AG04450 (cell line): ENCODE measurements at regions of chr3 and their contacts with region 1.

Region 1: GRCh38 chr3:158659454-158660237 is 12.8 kb downstream of the LXN start:
- DNase-seq: peak; percentile 55
- H3K4me3 ChIP-seq: no peak overlapping the region
- H3K27ac ChIP-seq: no peak overlapping the region
- H3K27me3 ChIP-seq: no peaks in the 10 kb centered on the region
- CTCF ChIP-seq: peak; percentile 76

Region 2: GRCh38 chr3:158539414-158540014 is 120.1 kb before region 1 on chr3:
- CTCF ChIA-PET with region 1: interaction called, 22 read pairs
- POLR2A ChIA-PET with region 1: no interaction called
- DNase-seq: peak; percentile 16
- H3K4me3 ChIP-seq: no peak overlapping the region
- H3K27ac ChIP-seq: no peak overlapping the region
- H3K27me3 ChIP-seq: no peaks in the 10 kb centered on the region
- CTCF ChIP-seq: peak; percentile 60

Region 3: DNA sequence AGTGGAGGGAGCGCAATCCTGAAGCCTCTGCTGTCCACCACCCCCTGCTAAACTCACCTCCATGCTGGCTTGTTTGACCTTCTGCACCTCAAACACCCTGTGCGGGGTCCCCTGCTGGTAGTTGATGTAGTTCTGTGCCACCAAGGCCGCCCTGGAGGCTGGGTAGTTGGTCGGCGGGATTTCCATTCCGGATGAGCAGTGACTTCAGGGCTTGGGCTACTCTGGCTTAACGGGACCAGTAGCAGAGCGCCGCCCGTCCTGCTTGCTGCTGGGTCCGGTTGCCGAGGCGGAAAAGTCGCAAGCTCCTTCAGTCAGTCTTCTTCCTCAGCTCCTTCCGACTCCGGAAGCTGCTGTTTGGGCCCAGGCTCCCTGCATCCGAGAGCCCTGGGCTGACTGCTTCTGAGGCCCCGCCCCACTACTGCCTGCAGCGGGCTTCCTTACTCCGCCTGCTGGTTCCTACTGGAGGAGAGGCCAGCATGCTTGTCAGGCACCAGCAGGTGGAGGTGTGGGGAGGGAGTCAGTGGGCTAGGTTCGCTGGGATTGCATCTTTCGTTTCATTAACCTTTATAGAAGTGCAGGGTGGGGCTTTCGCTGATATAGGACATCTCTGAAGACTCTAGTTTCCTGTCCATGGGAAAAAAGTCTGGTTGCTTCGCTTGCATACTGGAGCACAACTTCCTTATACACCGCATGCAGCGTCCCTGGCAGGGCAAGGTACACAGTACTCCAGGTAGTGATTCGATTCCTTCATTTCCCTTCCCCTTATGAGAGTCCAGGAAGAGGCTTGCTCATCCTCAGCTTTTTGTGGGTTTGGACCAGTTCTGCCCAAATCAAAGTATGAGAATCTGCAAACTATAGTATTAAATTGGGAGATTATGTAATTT is 12.9 kb after region 1 on chr3 and contains the start of gene LXN:
- CTCF ChIA-PET with region 1: interaction called, 85 read pairs
- POLR2A ChIA-PET with region 1: interaction called, 3 read pairs
- DNase-seq: peak; percentile 60
- H3K4me3 ChIP-seq: peak within 1 kb of the TSS; percentile 90
- H3K27ac ChIP-seq: peak within 1 kb of the TSS; percentile 55
- H3K27me3 ChIP-seq: no peaks in the 10 kb centered on the region
- CTCF ChIP-seq: peak; percentile 90
- polyA plus RNA-seq, gene LXN: 281 and 347 TPM in 2 replicates

Region 4: DNA sequence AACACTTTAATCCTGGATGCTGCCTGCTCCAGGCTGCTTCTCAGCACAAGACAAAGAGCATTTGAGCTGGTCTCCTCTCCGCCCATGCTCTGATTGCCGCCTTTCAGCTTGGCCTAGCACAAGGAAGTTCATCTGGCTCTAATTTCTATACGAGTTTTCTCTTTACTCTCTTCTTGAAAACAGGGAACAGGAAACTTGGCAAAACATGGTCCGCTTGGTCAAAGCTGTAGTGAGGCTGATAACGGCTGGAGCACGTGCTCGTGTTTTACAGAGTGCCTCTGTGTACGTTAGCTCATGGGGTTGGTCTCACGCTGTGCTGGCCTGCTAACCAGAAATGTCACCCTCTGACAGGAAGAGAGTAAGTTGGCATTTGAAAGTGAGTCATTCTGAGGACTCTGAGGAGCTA is 53.5 kb after region 1 on chr3:
- CTCF ChIA-PET with region 1: interaction called, 11 read pairs
- POLR2A ChIA-PET with region 1: no interaction called
- DNase-seq: no peak
- H3K4me3 ChIP-seq: no peak overlapping the region
- H3K27ac ChIP-seq: no peak overlapping the region
- H3K27me3 ChIP-seq: no peaks in the 10 kb centered on the region
- CTCF ChIP-seq: no peak

Region 5: GRCh38 chr3:158801696-158802408 is 142.2 kb after region 1 on chr3 and contains the start of gene MFSD1:
- CTCF ChIA-PET with region 1: interaction called, 33 read pairs
- POLR2A ChIA-PET with region 1: no interaction called
- DNase-seq: peak; percentile 67
- H3K4me3 ChIP-seq: peak within 1 kb of the TSS; percentile 79
- H3K27ac ChIP-seq: peak within 1 kb of the TSS; percentile 74
- H3K27me3 ChIP-seq: no peaks in the 10 kb centered on the region
- CTCF ChIP-seq: no peak
- polyA plus RNA-seq, gene MFSD1: 69.6 and 89.9 TPM in 2 replicates

Region 6: DNA sequence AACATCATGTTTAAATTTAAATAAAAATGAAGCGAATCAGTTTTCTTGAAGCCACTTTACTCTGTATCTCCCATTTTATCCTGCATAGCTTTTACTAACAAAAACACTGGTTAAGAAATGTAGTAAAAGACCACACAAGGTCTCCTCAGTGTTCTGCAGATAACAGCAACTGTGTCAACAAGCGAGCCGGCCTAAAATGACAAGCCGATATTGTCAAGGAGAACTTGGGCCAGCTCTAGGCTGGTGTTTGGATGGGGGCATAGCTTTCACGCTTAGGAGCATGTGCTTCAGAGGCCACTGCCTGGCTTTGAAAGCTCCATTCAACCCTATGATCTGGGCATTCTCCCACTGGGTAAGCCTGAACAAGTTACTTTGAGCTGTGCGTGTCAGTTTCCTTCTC is 180.3 kb after region 1 on chr3:
- CTCF ChIA-PET with region 1: no interaction called
- POLR2A ChIA-PET with region 1: no interaction called
- DNase-seq: no peak
- H3K4me3 ChIP-seq: no peak overlapping the region
- H3K27ac ChIP-seq: no peak overlapping the region
- H3K27me3 ChIP-seq: no peaks in the 10 kb centered on the region
- CTCF ChIP-seq: no peak